ENCODE measurements at regions of chr18 and their contacts with region 1.

Region 1: GRCh38 chr18:47930931-47931717 is 665 bp upstream of the SMAD2 start:
- DNase-seq: peak; percentile 98 to 99
- ATAC-seq: peak; percentile 93 to 94 (median 94)
- H3K4me3 ChIP-seq: peak overlapping the region; percentile 86
- H3K27ac ChIP-seq: peak overlapping the region; percentile 98
- H3K4me1 ChIP-seq: peaks cover 32% of the 10 kb centered on the region
- H3K27me3 ChIP-seq: no peaks in the 10 kb centered on the region
- CTCF ChIP-seq: no peak

Region 2: DNA sequence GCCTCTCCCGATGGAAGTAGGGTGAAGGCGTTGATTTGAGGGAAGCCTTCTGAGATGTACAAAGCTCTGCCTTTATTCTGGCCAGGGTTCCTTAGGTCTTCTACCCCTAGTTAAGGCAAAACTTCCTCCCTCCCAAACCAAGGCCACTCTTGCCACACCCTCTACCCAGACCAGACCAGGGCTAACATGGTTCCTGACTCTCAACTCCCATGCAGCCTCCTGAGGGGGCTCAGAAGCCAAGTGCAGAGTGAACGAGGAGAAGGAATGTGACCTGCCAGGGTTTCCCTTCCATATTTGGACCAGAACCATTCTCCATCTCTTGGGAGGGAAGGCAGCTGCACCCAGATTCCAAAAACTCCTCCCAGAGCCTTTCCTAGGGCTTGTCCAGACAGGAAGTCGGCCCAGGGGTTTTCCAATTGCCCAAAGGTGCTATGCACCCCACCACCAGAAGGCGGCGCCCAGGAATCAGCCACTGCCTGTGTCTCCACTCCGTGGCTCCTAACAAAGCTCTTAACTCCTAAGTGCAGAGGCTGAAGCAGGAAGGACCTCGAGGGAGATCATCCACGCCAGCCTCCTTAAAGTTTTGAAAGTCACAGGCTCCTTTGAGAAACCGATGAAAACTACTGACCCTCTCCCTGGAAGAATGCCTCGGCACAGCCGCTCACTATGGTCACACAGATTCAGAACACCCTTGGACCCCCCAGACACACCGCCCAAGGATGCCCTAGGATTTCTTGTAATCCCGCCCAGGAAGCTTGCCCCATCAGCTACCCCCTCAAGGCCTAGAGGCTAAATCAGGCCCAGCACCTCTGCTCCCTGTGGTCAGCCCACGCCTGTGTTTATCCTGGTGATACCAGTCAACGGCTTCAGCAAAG is 158.5 kb before region 1 on chr18:
- intact Hi-C with region 1: loop called in 1 of 2 experiments (anchors 5 kb)
- DNase-seq: peak; percentile 43 to 65
- ATAC-seq: peak; percentile 74 to 85 (median 80)
- H3K4me3 ChIP-seq: no peak overlapping the region
- H3K27ac ChIP-seq: no peak overlapping the region
- H3K4me1 ChIP-seq: no peaks in the 10 kb centered on the region
- H3K27me3 ChIP-seq: no peaks in the 10 kb centered on the region
- CTCF ChIP-seq: peak; percentile 75

Region 3: GRCh38 chr18:47863041-47863440 is 68.1 kb before region 1 on chr18:
- intact Hi-C with region 1: loop called in 1 of 2 experiments (anchors 10 kb)
- DNase-seq: peak in 1 of 2 donors; percentile 15
- ATAC-seq: peak; percentile 96 to 99 (median 98)
- H3K4me3 ChIP-seq: no peak overlapping the region
- H3K27ac ChIP-seq: peak overlapping the region; percentile 14
- H3K4me1 ChIP-seq: peaks cover 32% of the 10 kb centered on the region
- H3K27me3 ChIP-seq: no peaks in the 10 kb centered on the region
- CTCF ChIP-seq: no peak

Region 4: DNA sequence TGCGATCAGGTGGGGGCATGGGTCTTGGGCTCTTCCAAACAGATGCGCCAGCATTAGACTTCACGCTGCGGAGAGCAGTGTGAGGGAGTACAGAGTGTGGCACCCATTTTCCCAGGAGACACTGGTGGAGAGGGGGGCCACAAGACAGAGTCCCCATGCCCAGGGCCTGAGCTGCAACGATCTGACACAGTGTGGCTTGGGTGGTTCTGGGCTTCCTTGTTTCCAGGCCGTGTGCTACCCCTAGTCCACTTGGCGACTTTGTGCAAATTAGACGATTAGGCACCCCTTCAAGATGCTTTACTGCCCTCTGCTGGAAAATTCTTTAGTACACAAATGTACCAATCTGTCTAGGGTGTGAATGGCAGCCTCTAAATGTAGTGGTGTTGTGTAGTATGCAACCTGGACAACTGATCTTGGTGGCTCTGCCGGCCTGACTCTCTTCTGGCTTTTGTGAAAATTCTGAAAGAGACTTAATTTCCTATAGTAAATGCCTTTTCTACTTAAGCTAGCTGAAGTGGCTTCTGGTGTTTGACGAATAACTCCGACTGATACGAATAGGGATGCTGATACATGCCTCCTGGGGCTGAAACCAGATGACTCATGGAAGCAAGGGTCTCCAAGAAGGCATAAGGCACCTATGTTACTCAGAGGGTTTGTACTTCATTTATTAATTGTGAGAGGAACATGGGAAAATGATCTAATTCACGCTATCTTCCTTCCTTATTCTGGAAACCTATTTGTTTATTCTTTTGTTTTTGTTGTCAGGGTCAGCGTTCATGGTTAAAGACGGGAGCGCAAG is 91.6 kb after region 1 on chr18:
- intact Hi-C with region 1: loop called in 1 of 2 experiments (anchors 5 kb)
- DNase-seq: no peak
- ATAC-seq: peak; percentile 72 to 87 (median 78)
- H3K4me3 ChIP-seq: no peak overlapping the region
- H3K27ac ChIP-seq: no peak overlapping the region
- H3K4me1 ChIP-seq: peaks cover 8% of the 10 kb centered on the region
- H3K27me3 ChIP-seq: peaks cover 0 to 4% (median 0%) of the 10 kb centered on the region in 3 donors
- CTCF ChIP-seq: peak; percentile 61

Region 5: DNA sequence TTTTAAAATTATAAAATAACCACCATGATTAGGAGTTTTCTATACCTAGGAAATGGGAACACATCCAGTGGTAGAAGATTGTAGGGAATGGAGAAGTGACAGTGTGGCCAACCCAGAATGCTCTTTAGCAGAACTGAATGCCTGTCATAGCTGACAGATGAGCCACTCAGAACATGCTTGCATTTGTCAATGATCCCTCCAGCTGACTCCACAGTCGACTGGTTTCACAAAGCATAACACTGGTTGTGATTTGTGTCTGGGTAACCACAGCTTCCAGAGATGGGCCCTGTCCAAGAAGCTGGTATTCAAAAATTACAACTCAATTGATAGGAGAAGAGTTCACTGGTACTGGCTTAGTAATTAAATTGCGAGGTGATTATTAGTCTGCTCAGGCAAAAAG is 598.7 kb after region 1 on chr18:
- intact Hi-C with region 1: no loop called
- DNase-seq: no peak
- ATAC-seq: peak; percentile 93 to 98 (median 96)
- H3K4me3 ChIP-seq: no peak overlapping the region
- H3K27ac ChIP-seq: no peak overlapping the region
- H3K4me1 ChIP-seq: peaks cover 8% of the 10 kb centered on the region
- H3K27me3 ChIP-seq: no peaks in the 10 kb centered on the region
- CTCF ChIP-seq: no peak

Measured in psoas muscle (tissue), 8 donors.